CD4-positive, alpha-beta memory T cell (primary cell): ENCODE measurements at regions of chr7 and their contacts with region 1.

Region 1: DNA sequence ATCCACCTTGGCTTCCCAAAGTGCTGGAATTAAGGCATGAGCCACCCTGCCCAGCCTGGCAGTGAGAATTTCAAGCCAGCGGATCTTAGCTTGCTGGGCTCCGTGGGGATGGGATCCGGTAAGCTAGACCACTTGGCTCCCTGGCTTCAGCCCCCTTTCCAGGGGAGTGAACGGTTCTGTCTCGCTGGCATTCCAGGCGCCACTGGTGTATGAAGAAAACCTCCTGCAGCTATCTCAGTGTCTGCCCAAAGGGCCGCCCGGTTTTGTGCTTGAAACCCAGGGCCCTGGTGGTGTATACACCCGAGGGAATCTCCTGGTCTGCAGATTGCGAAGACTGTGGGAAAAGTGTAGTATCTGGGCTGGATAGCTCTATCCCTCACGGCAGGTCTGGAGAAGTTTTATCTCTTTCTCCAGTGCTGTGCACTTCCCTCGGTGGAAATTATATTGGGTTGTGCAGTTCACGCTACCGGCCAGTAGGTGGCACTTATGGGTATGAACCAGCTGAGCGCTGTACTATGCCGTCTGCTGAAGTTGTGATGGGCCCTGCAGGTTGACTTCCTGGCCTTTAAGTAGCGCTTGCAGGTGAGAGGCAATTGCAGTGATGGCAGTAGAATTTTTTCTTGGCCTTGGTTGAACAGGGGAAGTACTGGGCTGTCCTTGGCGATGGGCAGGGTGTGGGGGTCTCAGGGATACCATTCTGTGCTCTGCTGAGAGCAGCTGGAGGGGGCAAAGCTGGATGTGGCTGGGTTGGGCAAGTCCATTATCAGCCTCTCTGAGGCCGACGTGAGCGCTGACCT is 138.0 kb upstream of the MTPN start:
- DNase-seq: peak in 4 of 5 donors; percentile 9 to 26 (median 24)
- H3K4me3 ChIP-seq: no peak overlapping the region
- H3K4me3 Mint-ChIP-seq: no peak overlapping the region
- H3K27ac ChIP-seq: no peak overlapping the region
- H3K27ac Mint-ChIP-seq: peak overlapping the region in 1 of 7 donors; percentile 44
- H3K4me1 ChIP-seq: no peaks in the 10 kb centered on the region
- H3K4me1 Mint-ChIP-seq: peaks cover 6 to 12% (median 6%) of the 10 kb centered on the region in 4 donors
- H3K27me3 ChIP-seq: no peaks in the 10 kb centered on the region
- H3K27me3 Mint-ChIP-seq: no peaks in the 10 kb centered on the region

Region 2: GRCh38 chr7:136086712-136087111 is 28.5 kb before region 1 on chr7:
- CTCF ChIA-PET with region 1: interaction called, 16 read pairs
- POLR2A ChIA-PET with region 1: no interaction called
- intact Hi-C with region 1: no loop called
- DNase-seq: peak in 4 of 5 donors; percentile 12 to 20 (median 14)
- H3K4me3 ChIP-seq: no peak overlapping the region
- H3K4me3 Mint-ChIP-seq: peak overlapping the region; percentile 18 to 60 (median 49)
- H3K27ac ChIP-seq: no peak overlapping the region
- H3K27ac Mint-ChIP-seq: peak overlapping the region in 1 of 7 donors; percentile 32
- H3K4me1 ChIP-seq: no peaks in the 10 kb centered on the region
- H3K4me1 Mint-ChIP-seq: peaks cover 0 to 1% (median 0%) of the 10 kb centered on the region in 4 donors
- H3K27me3 ChIP-seq: no peaks in the 10 kb centered on the region
- H3K27me3 Mint-ChIP-seq: no peaks in the 10 kb centered on the region

Region 3: DNA sequence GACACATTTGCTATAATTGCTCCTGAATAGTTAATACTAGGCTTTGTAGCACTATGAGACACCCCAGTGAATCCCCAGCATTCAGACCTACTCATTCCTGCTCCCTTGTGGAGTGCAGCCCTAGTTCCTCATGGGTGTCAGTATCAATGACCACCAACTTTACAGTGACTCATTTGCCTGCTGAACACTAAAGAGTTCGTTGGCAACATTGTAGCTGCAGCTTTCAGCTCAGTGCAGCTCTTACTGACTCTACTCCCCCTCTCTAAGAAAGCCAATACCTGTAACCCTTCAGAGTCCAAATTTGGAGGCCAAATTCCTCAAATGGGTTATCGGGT is 10.9 kb before region 1 on chr7:
- CTCF ChIA-PET with region 1: interaction called, 11 read pairs
- POLR2A ChIA-PET with region 1: no interaction called
- intact Hi-C with region 1: no loop called
- DNase-seq: no peak
- H3K4me3 ChIP-seq: no peak overlapping the region
- H3K4me3 Mint-ChIP-seq: no peak overlapping the region
- H3K27ac ChIP-seq: no peak overlapping the region
- H3K27ac Mint-ChIP-seq: no peak overlapping the region
- H3K4me1 ChIP-seq: no peaks in the 10 kb centered on the region
- H3K4me1 Mint-ChIP-seq: peaks cover 0 to 1% (median 0%) of the 10 kb centered on the region in 4 donors
- H3K27me3 ChIP-seq: no peaks in the 10 kb centered on the region
- H3K27me3 Mint-ChIP-seq: no peaks in the 10 kb centered on the region

Region 4: GRCh38 chr7:136130819-136131643 is 15.9 kb after region 1 on chr7:
- CTCF ChIA-PET with region 1: interaction called, 13 read pairs
- POLR2A ChIA-PET with region 1: no interaction called
- intact Hi-C with region 1: no loop called
- DNase-seq: no peak
- H3K4me3 ChIP-seq: no peak overlapping the region
- H3K4me3 Mint-ChIP-seq: no peak overlapping the region
- H3K27ac ChIP-seq: no peak overlapping the region
- H3K27ac Mint-ChIP-seq: no peak overlapping the region
- H3K4me1 ChIP-seq: no peaks in the 10 kb centered on the region
- H3K4me1 Mint-ChIP-seq: peaks cover 0 to 9% (median 3%) of the 10 kb centered on the region in 4 donors
- H3K27me3 ChIP-seq: no peaks in the 10 kb centered on the region
- H3K27me3 Mint-ChIP-seq: no peaks in the 10 kb centered on the region